Activated CD4-positive, alpha-beta memory T cell treated with anti-CD3 and anti-CD28 coated beads for 36 hours (primary cell): ENCODE measurements at regions of chr21 and their contacts with region 1.

Region 1: GRCh38 chr21:35342440-35342839 is 293.3 kb upstream of the RUNX1 start:
- DNase-seq: peak; percentile 66
- H3K4me3 Mint-ChIP-seq: peak overlapping the region; percentile 62
- H3K27ac Mint-ChIP-seq: peak overlapping the region; percentile 98
- H3K4me1 Mint-ChIP-seq: peaks cover 52% of the 10 kb centered on the region
- H3K27me3 Mint-ChIP-seq: no peaks in the 10 kb centered on the region

Region 2: GRCh38 chr21:34967509-34968289 is 374.7 kb before region 1 on chr21:
- CTCF ChIA-PET with region 1: no interaction called
- POLR2A ChIA-PET with region 1: no interaction called
- intact Hi-C with region 1: loop called (anchors 1 kb)
- DNase-seq: peak; percentile 75
- H3K4me3 Mint-ChIP-seq: peak overlapping the region; percentile 55
- H3K27ac Mint-ChIP-seq: peak overlapping the region; percentile 95
- H3K4me1 Mint-ChIP-seq: peaks cover 88% of the 10 kb centered on the region
- H3K27me3 Mint-ChIP-seq: no peaks in the 10 kb centered on the region

Region 3: GRCh38 chr21:35095859-35096291 is 246.6 kb before region 1 on chr21:
- CTCF ChIA-PET with region 1: no interaction called
- POLR2A ChIA-PET with region 1: interaction called, 3 read pairs
- intact Hi-C with region 1: loop called (anchors 1 kb)
- DNase-seq: peak; percentile 42
- H3K4me3 Mint-ChIP-seq: no peak overlapping the region
- H3K27ac Mint-ChIP-seq: peak overlapping the region; percentile 83
- H3K4me1 Mint-ChIP-seq: peaks cover 48% of the 10 kb centered on the region
- H3K27me3 Mint-ChIP-seq: peaks cover 2% of the 10 kb centered on the region

Region 4: GRCh38 chr21:35226948-35227744 is 115.3 kb before region 1 on chr21:
- CTCF ChIA-PET with region 1: no interaction called
- POLR2A ChIA-PET with region 1: no interaction called
- intact Hi-C with region 1: loop called (anchors 1 kb)
- DNase-seq: peak; percentile 76
- H3K4me3 Mint-ChIP-seq: peak overlapping the region; percentile 49
- H3K27ac Mint-ChIP-seq: peak overlapping the region; percentile 62
- H3K4me1 Mint-ChIP-seq: peaks cover 38% of the 10 kb centered on the region
- H3K27me3 Mint-ChIP-seq: no peaks in the 10 kb centered on the region

Region 5: DNA sequence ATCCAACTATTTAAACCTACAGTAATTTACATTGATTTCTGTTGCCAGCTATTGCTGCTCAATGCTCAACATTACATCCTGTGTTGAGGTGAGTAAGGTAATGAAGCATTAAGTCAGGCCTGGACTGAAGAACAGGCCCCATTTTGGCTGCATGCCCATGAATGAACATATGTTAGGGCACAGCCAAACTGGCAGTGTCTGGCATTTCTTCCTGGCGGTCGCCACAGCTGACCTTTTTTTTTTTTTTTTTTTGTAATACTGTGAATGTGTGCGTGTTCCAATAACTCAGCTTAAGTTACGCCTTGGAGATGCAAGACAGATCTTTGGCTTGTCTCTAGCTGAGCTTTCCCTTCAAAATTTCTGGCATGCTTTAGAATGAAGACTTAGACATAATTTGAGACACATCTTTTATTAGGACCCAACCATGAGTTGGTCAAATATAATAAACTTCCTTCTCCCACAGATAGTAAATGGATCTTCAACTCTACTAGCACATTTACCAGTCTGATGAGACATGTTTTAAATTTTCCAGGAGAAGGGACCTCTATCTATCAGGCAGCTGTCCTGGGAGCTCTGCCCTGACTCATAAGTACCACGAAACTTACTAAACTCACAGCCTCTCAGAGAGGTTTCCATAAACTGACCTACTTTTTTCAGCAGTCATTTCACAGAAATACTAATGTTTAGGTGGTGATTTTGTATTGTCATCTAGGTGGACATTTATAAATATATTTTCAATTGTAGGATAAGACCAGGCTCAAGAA is 47.8 kb after region 1 on chr21:
- CTCF ChIA-PET with region 1: no interaction called
- POLR2A ChIA-PET with region 1: no interaction called
- intact Hi-C with region 1: loop called (anchors 5 kb)
- DNase-seq: peak; percentile 20
- H3K4me3 Mint-ChIP-seq: no peak overlapping the region
- H3K27ac Mint-ChIP-seq: peak overlapping the region; percentile 6
- H3K4me1 Mint-ChIP-seq: peaks cover 18% of the 10 kb centered on the region
- H3K27me3 Mint-ChIP-seq: no peaks in the 10 kb centered on the region

Region 6: GRCh38 chr21:35578350-35578782 is 235.9 kb after region 1 on chr21:
- CTCF ChIA-PET with region 1: no interaction called
- POLR2A ChIA-PET with region 1: no interaction called
- intact Hi-C with region 1: loop called (anchors 2 kb)
- DNase-seq: no peak
- H3K4me3 Mint-ChIP-seq: no peak overlapping the region
- H3K27ac Mint-ChIP-seq: peak overlapping the region; percentile 72
- H3K4me1 Mint-ChIP-seq: peaks cover 30% of the 10 kb centered on the region
- H3K27me3 Mint-ChIP-seq: peaks cover 17% of the 10 kb centered on the region